Activated CD8-positive, alpha-beta memory T cell treated with anti-CD3 and anti-CD28 coated beads, Interleukin-2, amount 10 ng/mL, durations not matched to agents 7 days and 5 days (primary cell): ENCODE measurements at regions of chr13 and their contacts with region 1.

Region 1: DNA sequence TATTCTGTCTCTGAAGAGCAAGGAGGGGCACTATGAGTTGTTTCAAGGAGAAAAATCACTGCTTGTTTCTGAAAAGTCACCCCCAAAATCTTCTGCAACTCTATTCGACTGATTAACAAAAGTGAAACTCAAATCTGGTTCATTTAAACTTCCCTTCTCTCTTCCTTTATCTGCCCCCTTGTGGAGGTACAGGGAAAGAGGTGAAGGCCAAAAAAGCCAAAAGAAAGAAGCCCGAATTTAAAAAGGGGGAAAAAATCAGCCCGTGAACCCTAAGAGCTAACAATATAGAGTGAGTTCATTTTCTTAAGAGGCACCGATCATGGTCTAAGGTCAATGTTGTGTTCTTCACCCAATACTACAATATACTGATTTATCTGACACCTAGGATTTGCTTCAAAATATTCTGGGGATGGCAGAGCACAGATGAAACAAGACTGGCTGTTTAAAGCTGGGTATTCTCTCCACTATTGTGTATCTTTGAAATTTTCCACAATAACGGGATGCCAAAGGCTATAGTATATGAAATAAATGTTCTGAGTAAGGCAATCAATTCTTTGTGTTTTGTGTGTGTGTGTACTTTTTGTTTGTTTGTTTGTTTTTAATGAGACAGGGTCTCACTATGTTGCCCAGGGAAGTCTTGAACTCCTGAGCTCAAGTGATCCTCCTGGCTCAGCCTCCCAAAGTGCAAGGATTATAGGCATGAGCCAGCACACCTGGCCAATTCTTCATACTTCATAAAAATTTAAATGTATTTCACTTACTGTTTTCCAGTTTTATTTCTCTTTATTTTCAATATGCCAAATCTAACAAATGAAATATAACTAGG is 55.0 kb upstream of the EEF1AKMT1 start:
- DNase-seq: peak; percentile 51
- ATAC-seq: peak; percentile 75
- H3K4me3 Mint-ChIP-seq: peak overlapping the region; percentile 44
- H3K27ac Mint-ChIP-seq: peak overlapping the region; percentile 71
- H3K4me1 Mint-ChIP-seq: peaks cover 6% of the 10 kb centered on the region
- H3K27me3 Mint-ChIP-seq: no peaks in the 10 kb centered on the region

Region 2: DNA sequence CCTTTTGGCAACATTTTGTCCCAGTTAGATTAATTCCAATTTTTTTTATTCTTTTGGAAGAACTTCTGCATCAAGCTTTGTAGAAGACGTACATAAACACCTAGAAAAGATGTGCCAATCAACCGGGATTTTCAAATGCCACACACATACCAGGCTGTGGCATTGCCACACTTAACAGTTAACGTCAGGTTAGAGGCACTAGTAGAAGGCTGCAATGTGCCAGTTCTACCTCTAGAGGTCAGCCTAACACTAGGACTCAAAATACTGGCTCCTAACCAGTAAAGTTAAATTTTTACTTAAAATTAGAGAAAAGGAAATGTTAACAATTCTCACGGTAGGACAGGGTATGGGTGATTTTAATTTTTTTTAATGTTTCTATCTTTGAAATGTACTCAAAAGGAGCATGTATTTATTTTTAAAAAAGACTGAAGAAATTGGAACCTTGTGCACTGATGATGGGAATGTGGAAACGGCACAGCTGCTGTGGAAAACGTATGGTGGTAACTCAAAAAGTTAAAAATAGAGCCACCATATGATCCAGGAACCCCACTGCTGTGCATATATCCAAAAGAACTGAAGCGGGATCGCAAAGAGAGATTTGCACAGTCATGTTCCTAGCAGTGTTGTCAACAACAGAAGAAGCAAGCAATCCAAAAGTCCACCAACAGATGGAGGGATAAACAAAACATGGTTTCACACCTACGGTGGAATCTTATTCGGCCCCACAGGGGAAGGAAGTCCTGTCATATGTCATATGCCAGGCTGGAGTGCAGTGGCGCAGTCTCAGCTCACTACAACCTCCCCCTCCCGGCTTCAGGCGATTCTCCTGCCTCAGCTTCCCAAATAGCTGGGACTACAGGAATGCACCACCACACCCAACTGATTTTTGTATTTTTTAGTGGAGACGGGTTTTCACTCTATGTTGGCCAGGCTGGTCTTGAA is 333.4 kb before region 1 on chr13:
- CTCF ChIA-PET with region 1: interaction called, 24 read pairs
- DNase-seq: peak; percentile 75
- ATAC-seq: peak; percentile 67
- H3K4me3 Mint-ChIP-seq: no peak overlapping the region
- H3K27ac Mint-ChIP-seq: no peak overlapping the region
- H3K4me1 Mint-ChIP-seq: peaks cover 3% of the 10 kb centered on the region
- H3K27me3 Mint-ChIP-seq: no peaks in the 10 kb centered on the region

Region 3: DNA sequence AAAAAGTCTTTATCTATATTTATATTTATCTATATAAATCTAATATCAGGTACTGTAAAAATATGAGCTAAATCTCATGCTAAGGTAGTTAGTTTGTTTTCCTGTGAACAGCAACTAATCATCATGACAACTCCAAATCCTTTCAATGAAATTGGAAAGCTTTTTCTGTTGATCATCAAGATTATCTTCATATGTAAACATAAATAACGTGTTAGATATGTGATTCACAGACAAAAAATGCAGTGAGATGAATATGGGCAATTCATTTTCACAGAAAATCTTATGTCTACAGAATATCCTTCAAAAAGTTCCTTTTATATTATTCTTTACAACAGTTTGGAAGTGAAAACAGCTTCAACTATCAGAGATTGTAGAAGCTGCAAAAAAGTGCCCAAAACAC is 13.3 kb before region 1 on chr13:
- CTCF ChIA-PET with region 1: interaction called, 24 read pairs
- DNase-seq: no peak
- ATAC-seq: no peak
- H3K4me3 Mint-ChIP-seq: no peak overlapping the region
- H3K27ac Mint-ChIP-seq: no peak overlapping the region
- H3K4me1 Mint-ChIP-seq: peaks cover 3% of the 10 kb centered on the region
- H3K27me3 Mint-ChIP-seq: no peaks in the 10 kb centered on the region

Region 4: GRCh38 chr13:20891768-20892167 is 63.0 kb after region 1 on chr13:
- CTCF ChIA-PET with region 1: interaction called, 11 read pairs
- DNase-seq: no peak
- ATAC-seq: peak; percentile 77
- H3K4me3 Mint-ChIP-seq: no peak overlapping the region
- H3K27ac Mint-ChIP-seq: no peak overlapping the region
- H3K4me1 Mint-ChIP-seq: peaks cover 17% of the 10 kb centered on the region
- H3K27me3 Mint-ChIP-seq: no peaks in the 10 kb centered on the region

Region 5: GRCh38 chr13:20945952-20946383 is 117.2 kb after region 1 on chr13:
- CTCF ChIA-PET with region 1: no interaction called
- DNase-seq: no peak
- ATAC-seq: no peak
- H3K4me3 Mint-ChIP-seq: no peak overlapping the region
- H3K27ac Mint-ChIP-seq: no peak overlapping the region
- H3K4me1 Mint-ChIP-seq: peaks cover 9% of the 10 kb centered on the region
- H3K27me3 Mint-ChIP-seq: peaks cover 49% of the 10 kb centered on the region